HAP-1 (cell line): ENCODE measurements at regions of chr3 and their contacts with region 1.

Region 1: GRCh38 chr3:183122257-183122932 is 23.1 kb upstream of the MCCC1 start:
- DNase-seq: peak in 1 of 2 experiments; percentile 74
- H3K4me3 ChIP-seq: no peak overlapping the region
- H3K4me1 ChIP-seq: peaks cover 2% of the 10 kb centered on the region; the same call in 1 of the 2 replicates
- H3K27me3 ChIP-seq: no peaks in the 10 kb centered on the region

Region 2: DNA sequence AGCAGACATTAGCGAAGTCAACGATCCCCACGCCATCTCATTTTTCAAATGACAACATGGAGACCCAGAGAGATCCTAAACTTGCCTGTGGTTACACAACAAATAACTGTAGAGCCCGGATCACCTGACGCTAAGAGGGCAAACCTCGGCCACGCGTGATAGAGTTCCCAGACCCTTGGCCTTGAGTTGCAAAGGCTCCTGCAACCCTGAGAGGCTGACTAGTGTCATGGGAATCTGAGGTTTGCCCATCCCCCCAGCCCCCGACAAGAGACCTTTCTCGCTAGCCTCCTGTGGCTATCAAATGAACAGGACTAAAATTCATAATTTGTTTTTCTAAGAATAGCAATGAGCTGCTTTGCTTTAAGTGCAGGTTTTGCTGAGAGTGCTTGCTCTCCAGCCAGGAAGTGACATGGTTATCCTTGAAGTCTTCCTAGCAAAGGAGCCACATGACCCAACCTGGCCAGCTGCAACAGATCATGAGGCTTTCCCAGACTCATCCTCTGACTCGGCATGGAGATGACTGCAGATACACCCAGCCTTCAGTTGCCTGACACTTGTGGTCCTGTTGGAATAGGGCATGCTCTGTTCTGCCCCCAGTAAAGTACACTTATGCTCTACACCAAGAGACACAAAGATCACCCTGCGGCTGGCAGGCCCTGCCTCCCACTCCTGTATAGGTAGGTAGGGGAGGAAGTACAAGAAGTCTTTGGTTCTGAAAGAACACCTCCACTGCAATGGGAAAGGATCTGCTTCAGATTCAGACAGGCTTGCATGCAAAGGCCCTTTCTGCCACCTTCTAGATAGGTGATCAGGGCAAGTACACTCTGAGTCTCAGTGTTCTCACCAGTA is 270.0 kb after region 1 on chr3:
- in situ Hi-C with region 1: loop called (anchors 5 kb)
- DNase-seq: no peak
- H3K4me3 ChIP-seq: no peak overlapping the region
- H3K4me1 ChIP-seq: no peaks in the 10 kb centered on the region
- H3K27me3 ChIP-seq: no peaks in the 10 kb centered on the region